CD8-positive, alpha-beta T cell (primary cell): ENCODE measurements at regions of chr5 and their contacts with region 1.

Region 1: GRCh38 chr5:40755407-40756365 is at the start of gene TTC33:
- DNase-seq: peak; percentile 86 to 96 (median 94)
- ATAC-seq: peak; percentile 85
- H3K4me3 ChIP-seq: peak within 1 kb of the TSS; percentile 93 to 98
- H3K4me3 Mint-ChIP-seq: no peak within 1 kb of the TSS
- H3K27ac ChIP-seq: peak within 1 kb of the TSS; percentile 79 to 89
- H3K27ac Mint-ChIP-seq: no peak within 1 kb of the TSS
- H3K4me1 ChIP-seq: peaks cover 18% of the 10 kb centered on the region
- H3K4me1 Mint-ChIP-seq: peaks cover 24% of the 10 kb centered on the region
- H3K27me3 ChIP-seq: no peaks in the 10 kb centered on the region
- H3K27me3 Mint-ChIP-seq: no peaks in the 10 kb centered on the region
- CTCF ChIP-seq: peak; percentile 62
- total RNA-seq, gene TTC33: 6.7 to 7.1 TPM

Region 2: DNA sequence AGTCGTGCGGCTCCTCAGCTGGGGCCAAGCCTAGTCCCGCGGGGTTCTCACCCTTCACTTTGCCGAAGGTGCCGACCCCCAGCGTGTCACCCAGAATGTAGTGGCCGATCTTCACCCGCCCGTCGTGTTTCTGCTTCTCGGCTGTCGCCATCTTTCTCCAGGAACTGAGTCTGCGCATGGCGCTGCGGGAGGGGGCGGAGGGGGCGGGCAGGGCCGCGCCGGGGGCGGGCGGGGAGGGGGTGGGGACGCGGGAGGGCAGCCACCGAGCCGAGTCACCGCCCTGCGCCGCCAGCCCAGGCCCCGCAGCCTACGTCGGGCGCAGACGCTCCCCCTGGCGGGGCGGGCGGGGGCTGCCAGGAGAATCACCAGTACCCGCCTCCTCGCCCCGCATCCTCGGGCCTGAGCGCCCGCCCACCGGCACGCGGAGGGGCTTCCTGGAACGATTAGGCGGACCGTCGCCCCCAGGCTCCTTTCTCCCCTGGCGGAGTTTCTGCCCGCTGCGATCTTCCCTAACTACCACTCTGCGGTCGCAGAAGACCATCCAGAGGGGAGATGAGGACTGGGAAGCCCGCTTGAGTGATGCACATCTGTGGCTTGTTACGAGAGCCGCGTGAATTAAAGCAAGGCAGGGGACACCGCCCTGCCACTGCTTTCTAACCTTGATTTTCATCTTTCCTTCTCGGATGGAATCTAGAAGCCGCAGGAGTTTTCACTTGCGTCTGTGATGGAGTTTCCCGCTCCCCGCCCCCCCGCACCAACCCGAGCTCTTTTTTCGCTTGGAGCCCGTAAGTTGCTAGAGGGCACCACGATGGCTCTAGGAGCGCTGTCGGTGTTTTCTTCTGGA is 42.5 kb after region 1 on chr5 and contains the start of gene PRKAA1:
- CTCF ChIA-PET with region 1: no interaction called
- POLR2A ChIA-PET with region 1: interaction called, 7 read pairs
- intact Hi-C with region 1: loop called (anchors 1 kb)
- DNase-seq: peak; percentile 84 to 95 (median 90)
- ATAC-seq: peak; percentile 93
- H3K4me3 ChIP-seq: peak within 1 kb of the TSS; percentile 93 to 99
- H3K4me3 Mint-ChIP-seq: peak within 1 kb of the TSS; percentile 94
- H3K27ac ChIP-seq: peak within 1 kb of the TSS; percentile 90 to 94
- H3K27ac Mint-ChIP-seq: peak within 1 kb of the TSS; percentile 94
- H3K4me1 ChIP-seq: peaks cover 22% of the 10 kb centered on the region
- H3K4me1 Mint-ChIP-seq: peaks cover 47% of the 10 kb centered on the region
- H3K27me3 ChIP-seq: no peaks in the 10 kb centered on the region
- H3K27me3 Mint-ChIP-seq: no peaks in the 10 kb centered on the region
- CTCF ChIP-seq: peak; percentile 65
- total RNA-seq, gene PRKAA1: 113 to 114 TPM